Head of caudate nucleus (tissue), 42 donors: ENCODE measurements at regions of chr12 and their contacts with region 1.

Region 1: DNA sequence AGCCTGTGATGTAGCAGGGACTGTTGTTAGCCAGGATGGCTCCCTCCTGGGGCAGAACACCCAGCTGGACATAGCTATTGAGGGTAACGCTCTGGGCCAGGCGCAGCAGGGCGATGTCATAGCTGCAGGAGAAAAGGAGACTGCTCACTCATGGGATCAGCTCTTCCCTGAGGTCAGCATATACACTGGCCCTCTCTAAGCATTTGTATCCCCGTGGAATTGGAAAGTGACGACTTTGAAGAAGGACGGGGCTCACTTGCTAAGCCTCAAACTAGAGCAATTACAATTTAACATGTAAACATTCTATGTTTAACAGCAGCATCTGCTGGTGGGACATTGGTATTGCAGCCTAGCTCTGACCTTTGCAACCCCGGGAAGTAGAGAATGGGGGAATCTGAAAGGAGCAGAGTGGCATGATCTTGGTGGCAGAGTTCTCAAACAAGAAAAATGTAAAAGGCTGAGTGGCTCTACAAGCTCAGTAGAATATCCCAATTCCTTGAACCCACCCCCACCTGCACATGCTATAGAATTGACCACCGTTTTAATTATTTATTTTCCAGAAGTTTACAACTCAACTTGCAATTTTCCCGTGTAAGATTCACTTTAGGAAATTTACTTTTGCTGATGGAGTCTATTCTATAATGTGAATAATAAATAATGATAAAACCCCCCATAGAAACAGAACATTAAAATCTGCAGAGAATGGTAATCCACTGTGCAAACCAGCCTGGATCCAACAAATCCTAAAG is 5.0 kb downstream of the CELA1 start:
- DNase-seq: peak in 41 of 42 donors; percentile 10 to 91 (median 76)

Region 2: GRCh38 chr12:50825372-50825838 is 516.0 kb before region 1 on chr12:
- intact Hi-C with region 1: loop called (anchors 10 kb)
- DNase-seq: peak in 1 of 42 donors; percentile 7

Region 3: GRCh38 chr12:51047655-51048540 is 293.5 kb before region 1 on chr12 and contains the start of gene LETMD1:
- intact Hi-C with region 1: loop called (anchors 10 kb)
- DNase-seq: peak; percentile 90 to 98 (median 96)

Region 4: DNA sequence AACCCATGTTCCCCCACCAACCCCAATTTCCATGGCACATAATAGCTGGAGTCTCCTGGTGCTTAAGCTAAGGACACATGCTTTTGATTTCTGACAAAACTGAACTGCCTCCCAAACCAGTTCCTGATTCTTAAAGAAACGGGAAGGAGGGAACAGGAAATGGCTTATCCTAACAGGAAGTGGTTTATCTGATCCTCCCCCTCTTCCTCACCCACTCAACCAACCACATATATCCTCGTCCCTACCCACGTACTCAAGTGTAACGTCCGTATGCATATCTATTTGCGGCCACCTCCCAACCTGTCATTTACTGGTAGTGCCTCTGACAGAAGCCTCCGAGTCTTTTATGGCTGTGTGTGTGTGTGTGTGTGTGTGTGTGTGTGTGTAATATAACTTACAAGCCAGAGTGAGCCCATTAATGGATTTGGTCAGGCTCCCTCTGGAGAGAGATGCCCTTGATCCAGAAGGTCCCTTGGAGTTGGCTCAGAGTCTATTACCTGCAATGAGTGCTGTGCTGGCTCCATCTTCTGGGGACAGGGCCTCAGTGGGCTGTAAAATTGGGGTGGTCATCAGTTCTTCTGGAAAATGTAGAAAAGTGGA is 95.1 kb before region 1 on chr12:
- intact Hi-C with region 1: loop called (anchors 10 kb)
- DNase-seq: peak in 3 of 42 donors; percentile 8 to 27 (median 17)

Region 5: GRCh38 chr12:51371295-51371953 is 30.0 kb after region 1 on chr12:
- intact Hi-C with region 1: no loop called
- DNase-seq: peak in 14 of 42 donors; percentile 16 to 79 (median 36)